ENCODE measurements at regions of chr3 and their contacts with region 1.

Region 1: DNA sequence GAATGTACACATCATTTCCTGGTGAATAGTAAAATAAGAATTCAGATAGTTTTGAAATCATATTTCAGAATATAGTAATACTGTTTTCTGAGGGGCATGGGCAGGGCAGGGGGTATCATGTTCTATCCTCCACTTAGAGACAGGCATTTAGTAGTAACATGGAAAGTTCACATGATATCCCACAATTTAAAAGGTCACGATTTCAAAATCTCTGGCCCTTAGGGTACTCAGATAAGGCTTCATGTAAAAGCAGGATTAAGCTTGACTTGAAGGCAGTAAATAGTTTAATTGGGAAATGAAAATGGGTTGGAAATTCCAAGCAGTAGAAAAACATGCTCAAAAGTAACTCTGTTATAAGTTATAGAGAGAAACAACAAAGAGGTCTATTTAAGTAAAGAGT is 353.2 kb upstream of the AGTR1 start:
- DNase-seq: no peak
- ATAC-seq: no peak
- H3K4me3 ChIP-seq: no peak overlapping the region
- H3K27ac ChIP-seq: no peak overlapping the region
- H3K4me1 ChIP-seq: no peaks in the 10 kb centered on the region
- H3K27me3 ChIP-seq: no peaks in the 10 kb centered on the region; the same call in 1 of the 2 replicates
- CTCF ChIP-seq: no peak

Region 2: DNA sequence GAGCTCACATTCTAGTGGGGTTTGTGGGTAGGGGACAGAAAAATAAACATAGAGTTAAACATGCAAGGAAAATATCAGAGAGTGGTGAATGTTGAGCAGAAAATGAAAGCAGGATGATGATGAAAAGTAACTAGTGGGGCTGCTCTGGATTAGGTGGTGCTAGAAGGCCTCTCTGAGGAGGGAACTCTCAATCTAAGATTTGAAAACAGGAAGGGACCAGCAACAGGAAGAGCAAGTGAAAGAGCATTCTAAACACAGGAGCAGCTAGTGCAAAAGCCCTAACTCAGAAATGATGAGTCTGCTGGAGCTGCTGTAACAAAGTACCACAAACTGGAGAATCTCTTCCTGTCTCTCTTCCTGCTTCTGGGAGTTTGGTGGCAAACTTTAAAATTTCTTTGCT is 115.4 kb before region 1 on chr3:
- CTCF ChIA-PET with region 1: no interaction called
- POLR2A ChIA-PET with region 1: no interaction called
- intact Hi-C with region 1: loop called (anchors 10 kb)
- DNase-seq: no peak
- ATAC-seq: no peak
- H3K4me3 ChIP-seq: no peak overlapping the region
- H3K27ac ChIP-seq: no peak overlapping the region
- H3K4me1 ChIP-seq: no peaks in the 10 kb centered on the region
- H3K27me3 ChIP-seq: no peaks in the 10 kb centered on the region
- CTCF ChIP-seq: no peak

Region 3: GRCh38 chr3:148790851-148791735 is 446.6 kb after region 1 on chr3:
- CTCF ChIA-PET with region 1: no interaction called
- POLR2A ChIA-PET with region 1: no interaction called
- intact Hi-C with region 1: no loop called
- DNase-seq: no peak
- ATAC-seq: no peak
- H3K4me3 ChIP-seq: no peak overlapping the region
- H3K27ac ChIP-seq: no peak overlapping the region
- H3K4me1 ChIP-seq: no peaks in the 10 kb centered on the region
- H3K27me3 ChIP-seq: peaks cover 42% of the 10 kb centered on the region
- CTCF ChIP-seq: no peak

Measured in PC-3 (cell line).